GM12878 (cell line): ENCODE measurements at regions of chr3 and their contacts with region 1.

Region 1: GRCh38 chr3:185764163-185764979 is 60.5 kb downstream of the IGF2BP2 start:
- DNase-seq: no peak
- ATAC-seq: peak; percentile 73
- H3K4me3 ChIP-seq: no peak overlapping the region
- H3K27ac ChIP-seq: no peak overlapping the region
- H3K4me1 ChIP-seq: no peaks in the 10 kb centered on the region
- H3K27me3 ChIP-seq: peaks cover 0 to 4% of the 10 kb centered on the region in 2 experiments; a peak in 3 of 4 replicates
- CTCF ChIP-seq: no peak
- EP300 ChIP-seq: no peak
- POLR2A ChIP-seq: no peak
- RAD21 ChIP-seq: no peak

Region 2: DNA sequence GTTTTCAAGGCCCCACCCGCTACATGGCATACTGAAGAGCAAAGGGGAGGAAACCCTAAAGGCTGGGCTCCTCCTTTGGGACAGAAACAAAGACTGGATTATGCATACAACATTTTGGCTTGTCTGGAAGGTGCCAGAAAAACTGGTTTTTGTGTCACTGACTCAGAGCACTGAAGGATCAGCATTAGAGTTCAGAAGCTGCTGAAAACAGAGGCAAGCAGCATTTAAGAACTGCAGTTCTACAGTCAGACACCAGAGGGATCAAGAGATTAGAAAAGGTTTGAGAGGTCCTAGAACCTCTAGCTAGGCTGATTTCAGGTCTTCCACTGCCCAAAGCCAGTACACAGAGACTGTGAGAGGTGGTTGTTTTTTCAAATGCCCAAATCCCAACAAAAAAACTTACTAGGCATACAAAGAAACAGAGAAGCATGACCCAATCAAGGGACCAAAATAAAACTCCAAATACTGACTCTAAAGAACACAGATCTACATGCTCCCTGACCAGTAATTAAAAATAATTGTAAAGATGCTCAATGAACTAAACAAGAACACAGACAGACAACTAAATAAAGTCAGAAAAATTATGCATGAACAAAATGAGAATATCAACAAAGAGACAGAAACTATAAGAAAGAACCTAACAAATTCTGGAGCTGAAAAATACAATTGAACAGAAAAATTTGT is 87.1 kb before region 1 on chr3:
- CTCF ChIA-PET with region 1: interaction called, 64 read pairs
- POLR2A ChIA-PET with region 1: interaction called, 6 read pairs
- RAD21 ChIA-PET with region 1: interaction called, 29 read pairs
- SMC1A ChIA-PET with region 1: interaction called, 22 read pairs
- in situ Hi-C with region 1: loop called (anchors 5 kb)
- intact Hi-C with region 1: loop called (anchors 1 kb)
- DNase-seq: no peak
- ATAC-seq: peak; percentile 82
- H3K4me3 ChIP-seq: no peak overlapping the region
- H3K27ac ChIP-seq: no peak overlapping the region
- H3K4me1 ChIP-seq: no peaks in the 10 kb centered on the region
- H3K27me3 ChIP-seq: no peaks in the 10 kb centered on the region; a peak in 3 of 4 replicates
- CTCF ChIP-seq: peak; percentile 51 to 72 (median 68)
- EP300 ChIP-seq: no peak
- POLR2A ChIP-seq: no peak
- RAD21 ChIP-seq: peak; percentile 73

Region 3: GRCh38 chr3:185744997-185745843 is 19.2 kb before region 1 on chr3:
- CTCF ChIA-PET with region 1: interaction called, 15 read pairs
- POLR2A ChIA-PET with region 1: interaction called, 3 read pairs
- RAD21 ChIA-PET with region 1: interaction called, 4 read pairs
- SMC1A ChIA-PET with region 1: interaction called, 6 read pairs
- in situ Hi-C with region 1: no loop called
- intact Hi-C with region 1: no loop called
- DNase-seq: peak; percentile 17
- ATAC-seq: peak; percentile 71
- H3K4me3 ChIP-seq: no peak overlapping the region
- H3K27ac ChIP-seq: peak overlapping the region; percentile 9; the same call in 1 of the 2 replicates
- H3K4me1 ChIP-seq: peaks cover 14% of the 10 kb centered on the region
- H3K27me3 ChIP-seq: no peaks in the 10 kb centered on the region; a peak in 1 of 4 replicates
- CTCF ChIP-seq: no peak
- EP300 ChIP-seq: no peak
- POLR2A ChIP-seq: no peak
- RAD21 ChIP-seq: no peak